Testis (tissue), 5 donors: ENCODE measurements at regions of chr1 and their contacts with region 1.

Region 1: DNA sequence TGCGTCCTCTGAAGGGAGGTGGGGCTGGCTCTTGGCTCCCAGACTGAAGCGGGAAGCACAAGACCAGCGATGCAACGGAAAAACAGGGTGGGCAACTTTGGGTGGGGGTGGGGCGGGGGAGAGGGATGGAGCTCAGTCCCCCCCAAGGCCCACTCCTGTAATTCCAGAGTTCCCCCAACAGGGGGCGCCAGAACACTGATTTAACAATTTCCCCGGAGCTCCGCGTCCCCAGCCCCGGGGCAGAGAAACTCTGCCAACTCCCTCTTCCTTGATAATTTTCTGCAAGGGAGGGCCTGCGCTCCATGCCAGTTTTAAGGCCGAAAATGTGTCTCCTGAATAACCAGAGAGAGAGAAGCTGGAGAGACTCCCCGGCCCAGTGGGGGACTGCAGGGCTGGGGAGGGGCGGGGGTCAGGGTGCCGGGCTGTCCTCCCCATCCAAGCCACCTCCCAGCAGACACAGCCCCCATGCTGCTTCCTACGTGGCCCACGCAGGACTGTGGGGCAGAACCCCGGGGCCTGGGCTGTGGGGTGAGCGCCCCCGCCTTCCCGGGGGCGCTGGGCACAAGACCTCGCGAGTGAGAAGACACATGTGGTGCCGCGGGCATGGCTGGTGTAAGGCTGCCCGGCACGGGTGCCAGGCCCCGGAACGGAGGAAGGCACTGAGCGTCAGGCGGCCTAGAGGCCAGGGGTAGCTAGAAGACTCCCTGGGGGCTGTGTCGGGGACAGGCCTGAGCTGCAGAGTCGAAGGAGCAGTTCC is 51.4 kb downstream of the KIF21B start:
- DNase-seq: peak; percentile 79
- H3K4me3 ChIP-seq: no peak overlapping the region
- H3K27ac ChIP-seq: no peak overlapping the region
- H3K4me1 ChIP-seq: peaks cover 3% of the 10 kb centered on the region
- H3K27me3 ChIP-seq: no peaks in the 10 kb centered on the region
- CTCF ChIP-seq: peak; percentile 60 to 99 (median 69)
- POLR2A ChIP-seq: no peak

Region 2: DNA sequence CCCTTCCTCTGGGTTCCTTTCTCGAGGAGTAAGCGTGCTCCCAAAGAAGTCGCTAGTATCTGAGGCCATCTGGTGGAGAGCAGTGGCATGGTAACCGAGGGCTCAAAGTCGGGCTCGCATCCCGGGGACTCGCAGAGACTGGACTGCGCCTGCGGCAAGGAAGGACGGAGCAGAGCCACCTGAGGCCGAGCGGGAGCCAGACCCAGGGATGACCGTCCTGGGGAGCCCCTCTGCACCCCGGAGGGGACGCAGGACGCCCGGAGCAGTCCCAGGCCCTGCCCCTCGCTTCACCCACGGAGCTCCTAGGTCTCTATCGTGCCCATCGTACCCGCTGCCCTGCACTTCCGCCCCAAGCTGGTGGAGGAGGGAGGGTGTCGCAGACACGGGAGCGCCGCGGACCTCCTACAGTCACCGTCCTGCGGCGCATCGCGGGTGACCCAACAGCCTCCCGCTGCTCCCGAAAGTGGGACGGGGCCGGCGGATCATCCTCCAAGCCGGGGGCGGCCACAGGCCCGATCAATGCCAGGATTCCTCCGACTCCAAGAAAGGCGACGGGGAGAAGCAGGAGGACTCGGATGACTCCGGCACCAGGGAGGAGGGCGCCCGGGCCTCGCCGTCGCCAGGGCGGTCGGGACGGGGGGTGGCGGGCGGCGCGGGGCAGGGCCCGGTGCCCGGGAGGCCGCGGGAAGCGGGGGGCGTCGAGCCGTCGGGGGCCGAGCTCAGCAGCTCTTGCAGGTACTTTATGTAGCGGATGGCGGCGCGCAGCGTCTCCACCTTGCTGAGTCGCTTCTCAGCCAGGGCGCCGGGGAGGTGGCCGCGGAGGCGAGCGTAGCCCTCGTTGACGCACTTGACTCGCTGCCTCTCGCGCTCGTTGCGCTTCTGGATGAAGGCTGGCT is 142.4 kb after region 1 on chr1:
- intact Hi-C with region 1: loop called (anchors 10 kb)
- DNase-seq: peak; percentile 95
- H3K4me3 ChIP-seq: peak overlapping the region; percentile 56 to 69
- H3K27ac ChIP-seq: no peak overlapping the region
- H3K4me1 ChIP-seq: peaks cover 3% of the 10 kb centered on the region
- H3K27me3 ChIP-seq: no peaks in the 10 kb centered on the region
- CTCF ChIP-seq: peak; percentile 73 to 80 (median 80)
- POLR2A ChIP-seq: no peak